ENCODE measurements at regions of chr20 and their contacts with region 1.

Region 1: GRCh38 chr20:34312544-34313217 is 9.5 kb upstream of the AHCY start:
- DNase-seq: peak; percentile 97 to 99
- H3K4me3 ChIP-seq: peak overlapping the region; percentile 53
- H3K4me3 Mint-ChIP-seq: peak overlapping the region; percentile 77
- H3K27ac Mint-ChIP-seq: peak overlapping the region; percentile 79
- H3K4me1 ChIP-seq: peaks cover 34% of the 10 kb centered on the region
- H3K4me1 Mint-ChIP-seq: peaks cover 16% of the 10 kb centered on the region
- H3K27me3 ChIP-seq: no peaks in the 10 kb centered on the region
- H3K27me3 Mint-ChIP-seq: no peaks in the 10 kb centered on the region
- CTCF ChIP-seq: peak; percentile 100

Region 2: DNA sequence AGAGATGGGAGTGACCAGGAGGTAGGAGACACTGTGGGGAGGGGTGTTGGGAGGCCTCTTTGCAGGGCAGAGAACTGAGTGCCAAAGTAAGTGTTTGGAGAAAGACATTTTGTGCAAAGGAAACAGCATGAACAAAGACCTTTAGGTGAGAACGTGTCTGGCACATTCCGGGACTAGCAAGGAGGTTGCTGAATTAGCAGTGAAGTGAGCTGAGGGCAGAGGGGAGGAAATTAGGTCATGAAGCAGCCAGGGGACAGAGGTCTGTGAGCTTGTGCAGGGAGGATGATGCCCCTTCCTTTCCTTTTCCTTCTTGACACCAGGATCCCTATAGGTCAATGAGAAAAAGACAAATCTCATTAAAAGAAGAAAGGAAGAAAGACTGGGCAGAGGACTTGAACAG is 11.9 kb after region 1 on chr20:
- CTCF ChIA-PET with region 1: interaction called, 27 read pairs
- POLR2A ChIA-PET with region 1: no interaction called
- intact Hi-C with region 1: no loop called
- DNase-seq: no peak
- H3K4me3 ChIP-seq: no peak overlapping the region
- H3K4me3 Mint-ChIP-seq: no peak overlapping the region
- H3K27ac Mint-ChIP-seq: no peak overlapping the region
- H3K4me1 ChIP-seq: peaks cover 7% of the 10 kb centered on the region
- H3K4me1 Mint-ChIP-seq: peaks cover under 1% of the 10 kb centered on the region
- H3K27me3 ChIP-seq: no peaks in the 10 kb centered on the region
- H3K27me3 Mint-ChIP-seq: no peaks in the 10 kb centered on the region
- CTCF ChIP-seq: no peak

Region 3: DNA sequence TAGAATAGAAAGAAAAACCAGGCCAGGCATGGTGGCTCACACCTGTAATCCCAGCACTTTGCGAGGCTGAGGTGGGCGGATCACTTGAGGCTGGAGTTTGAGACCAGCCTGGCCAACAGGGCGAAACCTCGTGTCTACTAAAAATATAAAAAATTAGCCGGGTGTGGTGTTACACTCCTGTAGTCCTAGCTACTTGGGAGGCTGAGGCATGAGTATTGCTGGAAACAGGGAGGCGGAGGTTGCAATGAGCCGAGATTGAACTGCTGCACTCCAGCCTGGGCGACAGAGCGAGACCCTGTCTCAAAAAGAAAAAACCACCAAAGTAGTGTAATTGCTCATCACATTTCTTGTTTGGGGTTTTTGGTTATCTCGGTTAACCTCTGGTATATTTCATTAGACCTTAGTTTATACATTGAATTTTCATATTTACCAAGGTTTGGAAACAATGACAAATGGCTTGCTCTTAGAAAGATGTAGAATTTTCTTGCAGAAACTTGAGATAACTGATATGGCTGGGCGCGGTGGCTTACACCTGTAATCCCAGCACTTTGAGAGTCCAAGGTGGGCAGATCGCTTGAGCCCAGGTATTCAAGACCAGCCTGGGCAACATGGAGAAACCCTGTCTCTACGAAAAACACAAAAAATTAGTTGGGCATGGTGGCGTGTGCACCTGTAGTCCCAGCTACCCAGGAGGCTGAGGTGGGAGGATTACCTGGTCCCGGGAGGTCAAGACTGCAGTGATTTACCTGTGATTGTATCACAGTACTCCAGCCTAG is 64.6 kb after region 1 on chr20:
- CTCF ChIA-PET with region 1: interaction called, 11 read pairs
- POLR2A ChIA-PET with region 1: interaction called, 3 read pairs
- intact Hi-C with region 1: no loop called
- DNase-seq: peak in 1 of 2 experiments; percentile 26
- H3K4me3 ChIP-seq: no peak overlapping the region
- H3K4me3 Mint-ChIP-seq: no peak overlapping the region
- H3K27ac Mint-ChIP-seq: peak overlapping the region; percentile 6
- H3K4me1 ChIP-seq: peaks cover 11% of the 10 kb centered on the region
- H3K4me1 Mint-ChIP-seq: peaks cover 20% of the 10 kb centered on the region
- H3K27me3 ChIP-seq: no peaks in the 10 kb centered on the region
- H3K27me3 Mint-ChIP-seq: no peaks in the 10 kb centered on the region
- CTCF ChIP-seq: no peak

Region 4: DNA sequence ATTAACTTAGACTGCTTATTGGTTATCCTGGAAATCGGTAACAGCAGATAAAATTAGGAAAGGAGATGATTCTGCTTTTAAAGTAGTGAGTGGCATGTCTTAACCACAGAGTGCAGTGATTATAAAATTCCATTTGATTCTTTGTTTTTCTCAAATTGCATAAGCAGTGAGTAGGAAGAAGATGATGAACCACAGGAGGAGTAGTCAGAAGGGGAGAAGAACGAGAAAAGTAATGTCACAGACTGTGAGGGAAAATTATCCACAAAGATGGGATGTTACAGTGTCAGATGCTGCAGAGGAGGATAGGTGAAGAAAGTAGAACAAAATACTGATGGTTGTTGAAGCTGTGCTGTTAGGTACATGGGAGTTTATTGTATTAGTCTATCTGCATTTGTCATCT is 113.3 kb after region 1 on chr20:
- CTCF ChIA-PET with region 1: interaction called, 37 read pairs
- POLR2A ChIA-PET with region 1: no interaction called
- intact Hi-C with region 1: loop called (anchors 1 kb)
- DNase-seq: no peak
- H3K4me3 ChIP-seq: no peak overlapping the region
- H3K4me3 Mint-ChIP-seq: peak overlapping the region; percentile 57
- H3K27ac Mint-ChIP-seq: peak overlapping the region; percentile 80
- H3K4me1 ChIP-seq: peaks cover 46% of the 10 kb centered on the region
- H3K4me1 Mint-ChIP-seq: peaks cover 39% of the 10 kb centered on the region
- H3K27me3 ChIP-seq: no peaks in the 10 kb centered on the region
- H3K27me3 Mint-ChIP-seq: no peaks in the 10 kb centered on the region
- CTCF ChIP-seq: no peak

Region 5: GRCh38 chr20:34473262-34473883 is 160.7 kb after region 1 on chr20:
- CTCF ChIA-PET with region 1: interaction called, 106 read pairs
- POLR2A ChIA-PET with region 1: interaction called, 4 read pairs
- intact Hi-C with region 1: loop called (anchors 1 kb)
- DNase-seq: peak; percentile 88 to 93
- H3K4me3 ChIP-seq: no peak overlapping the region
- H3K4me3 Mint-ChIP-seq: no peak overlapping the region
- H3K27ac Mint-ChIP-seq: no peak overlapping the region
- H3K4me1 ChIP-seq: peaks cover 8% of the 10 kb centered on the region; the same call in 1 of the 2 replicates
- H3K4me1 Mint-ChIP-seq: no peaks in the 10 kb centered on the region
- H3K27me3 ChIP-seq: no peaks in the 10 kb centered on the region
- H3K27me3 Mint-ChIP-seq: no peaks in the 10 kb centered on the region
- CTCF ChIP-seq: peak; percentile 88 to 91

Region 6: DNA sequence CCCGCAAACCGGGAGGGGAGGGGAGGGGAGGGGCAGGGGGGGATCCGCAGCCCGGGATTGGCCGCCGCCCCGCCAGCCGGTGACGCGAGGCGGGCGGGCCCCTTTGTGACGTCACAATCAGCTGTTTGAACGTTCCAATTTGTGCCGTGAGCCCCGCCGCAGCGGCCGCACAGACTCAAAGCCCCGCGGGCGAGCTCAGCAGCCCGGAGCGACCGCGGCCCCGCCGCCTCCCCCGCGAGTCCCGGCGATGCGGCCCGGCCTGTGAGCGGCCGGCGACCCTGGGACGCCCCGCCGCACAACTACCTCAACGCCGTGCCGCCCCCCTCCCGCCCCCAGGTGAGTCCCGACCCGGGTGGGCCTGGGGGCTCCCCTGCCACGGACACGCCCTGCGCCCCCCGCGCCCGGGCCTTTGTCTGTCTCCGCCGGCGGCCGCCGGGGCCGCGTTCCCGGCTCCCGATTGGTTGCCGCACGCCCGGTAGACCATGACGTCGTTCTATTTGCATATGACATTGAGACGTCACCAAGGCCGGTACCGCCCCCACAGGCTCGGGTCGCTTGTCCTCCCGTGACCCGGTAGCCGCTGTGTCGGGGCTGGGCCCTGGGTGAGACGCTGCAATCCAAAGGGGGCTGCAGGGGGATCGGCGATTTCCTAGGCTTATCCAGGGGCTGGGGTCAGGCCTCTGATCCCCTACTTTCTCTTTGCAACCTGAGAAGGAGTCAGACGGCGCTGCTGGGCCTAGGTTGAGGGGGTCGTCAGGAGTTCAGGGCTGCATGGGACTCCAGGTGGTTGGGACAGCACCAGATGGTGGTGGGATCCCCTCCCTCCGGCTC is 391.7 kb after region 1 on chr20 and contains the start of gene TP53INP2:
- CTCF ChIA-PET with region 1: interaction called, 14 read pairs
- POLR2A ChIA-PET with region 1: interaction called, 10 read pairs
- intact Hi-C with region 1: loop called (anchors 1 kb)
- DNase-seq: peak; percentile 99
- H3K4me3 ChIP-seq: peak within 1 kb of the TSS; percentile 48
- H3K4me3 Mint-ChIP-seq: peak within 1 kb of the TSS; percentile 99
- H3K27ac Mint-ChIP-seq: peak within 1 kb of the TSS; percentile 99
- H3K4me1 ChIP-seq: peaks cover 34% of the 10 kb centered on the region
- H3K4me1 Mint-ChIP-seq: peaks cover 44% of the 10 kb centered on the region
- H3K27me3 ChIP-seq: no peaks in the 10 kb centered on the region
- H3K27me3 Mint-ChIP-seq: peaks cover 3% of the 10 kb centered on the region
- CTCF ChIP-seq: no peak
- total RNA-seq, gene TP53INP2: 26.2 and 29.7 TPM in 2 replicates